PC-9 (cell line): ENCODE measurements at regions of chr9 and their contacts with region 1.

Region 1: DNA sequence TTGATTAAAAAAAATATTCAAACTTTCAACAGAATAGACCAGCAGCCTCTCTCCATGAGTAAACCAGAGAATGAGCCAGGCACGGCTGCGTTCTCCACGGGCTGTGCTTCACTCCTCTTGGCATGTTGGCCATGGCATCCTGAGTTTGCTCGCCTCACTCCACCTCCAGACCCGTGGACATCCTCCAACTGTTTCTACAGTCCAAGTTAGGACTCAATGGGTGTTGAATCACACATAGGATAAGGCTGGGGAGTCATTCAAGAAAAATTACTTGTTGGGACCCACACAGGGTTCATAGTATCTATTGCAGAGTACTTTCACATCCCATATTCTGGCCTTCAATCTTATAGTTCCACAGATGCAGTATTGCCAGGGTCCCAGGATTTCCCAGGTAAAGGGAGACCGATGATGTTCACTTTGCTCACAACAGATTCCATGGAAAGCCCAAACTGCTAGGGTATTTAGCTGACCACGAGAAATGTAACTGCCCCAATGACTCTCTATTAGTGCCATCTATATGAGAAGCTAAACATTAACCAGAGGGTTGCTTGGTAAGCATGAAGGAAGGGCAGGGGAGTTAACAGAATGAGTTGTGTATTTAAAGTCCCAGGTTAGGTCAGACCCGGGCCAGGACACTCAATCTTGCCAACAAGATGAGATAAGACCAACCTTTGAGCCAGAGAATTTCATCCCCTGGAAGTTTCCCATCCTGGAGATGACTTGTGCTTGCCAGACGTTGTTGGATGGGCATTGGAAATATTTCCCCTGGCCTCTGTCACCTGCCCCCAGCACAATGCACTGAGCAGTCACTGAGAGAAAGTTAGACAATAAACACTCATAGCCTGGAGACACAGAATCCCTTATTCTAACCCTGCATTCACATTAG is 19.7 kb upstream of the GDA start:
- DNase-seq: peak; percentile 78 to 80
- H3K4me3 ChIP-seq: no peak overlapping the region
- H3K27ac ChIP-seq: peak overlapping the region; percentile 70
- H3K4me1 ChIP-seq: peaks cover 37% of the 10 kb centered on the region
- H3K27me3 ChIP-seq: no peaks in the 10 kb centered on the region
- CTCF ChIP-seq: no peak

Region 2: GRCh38 chr9:72065076-72065475 is 64.4 kb before region 1 on chr9:
- CTCF ChIA-PET with region 1: no interaction called
- POLR2A ChIA-PET with region 1: no interaction called
- intact Hi-C with region 1: no loop called
- DNase-seq: no peak
- H3K4me3 ChIP-seq: no peak overlapping the region
- H3K27ac ChIP-seq: no peak overlapping the region
- H3K4me1 ChIP-seq: no peaks in the 10 kb centered on the region
- H3K27me3 ChIP-seq: no peaks in the 10 kb centered on the region
- CTCF ChIP-seq: no peak

Region 3: DNA sequence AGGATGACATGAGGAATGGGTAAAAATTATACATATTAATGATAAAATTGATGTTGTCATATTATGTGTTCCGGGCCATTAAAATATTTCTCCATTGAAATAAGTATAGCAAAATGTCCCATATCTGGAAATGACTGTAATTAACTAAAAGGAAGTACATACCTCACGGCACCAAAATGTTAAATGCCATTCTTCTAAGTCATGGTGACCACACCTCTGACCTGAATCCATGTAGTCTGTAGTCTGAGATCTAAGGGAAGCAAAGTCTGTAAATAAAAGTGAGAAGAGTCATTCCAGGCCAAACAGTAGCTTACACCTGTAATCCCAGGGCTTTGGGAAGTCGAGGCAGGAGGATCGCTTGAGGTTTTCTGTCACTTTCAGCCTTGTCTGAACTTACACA is 11.1 kb after region 1 on chr9:
- CTCF ChIA-PET with region 1: no interaction called
- POLR2A ChIA-PET with region 1: no interaction called
- intact Hi-C with region 1: loop called (anchors 1 kb)
- DNase-seq: peak; percentile 52 to 92
- H3K4me3 ChIP-seq: no peak overlapping the region
- H3K27ac ChIP-seq: peak overlapping the region; percentile 81
- H3K4me1 ChIP-seq: peaks cover 41% of the 10 kb centered on the region
- H3K27me3 ChIP-seq: no peaks in the 10 kb centered on the region
- CTCF ChIP-seq: no peak